Right ventricle myocardium inferior (tissue), 1 donor: ENCODE measurements at regions of chr13 and their contacts with region 1.

Region 1: DNA sequence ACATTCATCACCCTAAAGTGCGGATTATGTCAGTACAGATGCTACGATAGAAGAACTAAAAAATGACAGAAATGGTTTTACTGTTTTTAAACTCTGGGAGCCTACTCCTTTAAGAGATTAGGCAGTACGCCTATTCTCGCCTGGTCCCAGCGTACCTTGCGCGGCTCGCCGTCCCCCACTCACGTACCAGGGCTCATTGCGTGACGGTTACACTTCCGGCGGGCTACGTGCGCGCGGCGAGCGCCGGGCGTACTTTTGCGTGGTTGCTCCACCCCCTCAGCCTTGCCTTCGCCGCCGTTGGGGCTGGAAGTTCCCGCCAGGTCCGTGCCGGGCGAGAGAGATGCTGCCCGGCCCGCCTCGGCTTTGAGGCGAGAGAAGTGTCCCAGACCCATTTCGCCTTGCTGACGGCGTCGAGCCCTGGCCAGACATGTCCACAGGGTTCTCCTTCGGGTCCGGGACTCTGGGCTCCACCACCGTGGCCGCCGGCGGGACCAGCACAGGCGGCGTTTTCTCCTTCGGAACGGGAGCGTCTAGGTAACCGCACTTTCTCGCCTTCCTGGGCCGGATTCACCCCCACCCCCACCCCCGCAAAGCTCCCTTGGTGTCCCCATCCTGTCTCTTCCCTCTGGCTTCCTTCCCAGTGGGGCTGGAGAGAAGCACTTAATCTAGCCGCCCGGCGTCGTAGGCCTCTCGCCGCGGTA is at the start of gene NUP58:
- DNase-seq: peak; percentile 98
- ATAC-seq: peak; percentile 100
- total RNA-seq, gene NUP58: 21.9 TPM

Region 2: GRCh38 chr13:25286969-25287961 is 14.2 kb before region 1 on chr13 and contains the start of gene MTMR6:
- intact Hi-C with region 1: loop called (anchors 1 kb)
- DNase-seq: peak; percentile 97
- ATAC-seq: peak; percentile 98
- total RNA-seq, gene MTMR6: 15.4 TPM